Right ventricle myocardium superior (tissue), 1 donor: ENCODE measurements at regions of chr3 and their contacts with region 1.

Region 1: GRCh38 chr3:12891985-12892839 is 50.8 kb upstream of the RPL32 start:
- DNase-seq: peak; percentile 44
- ATAC-seq: peak; percentile 51

Region 2: DNA sequence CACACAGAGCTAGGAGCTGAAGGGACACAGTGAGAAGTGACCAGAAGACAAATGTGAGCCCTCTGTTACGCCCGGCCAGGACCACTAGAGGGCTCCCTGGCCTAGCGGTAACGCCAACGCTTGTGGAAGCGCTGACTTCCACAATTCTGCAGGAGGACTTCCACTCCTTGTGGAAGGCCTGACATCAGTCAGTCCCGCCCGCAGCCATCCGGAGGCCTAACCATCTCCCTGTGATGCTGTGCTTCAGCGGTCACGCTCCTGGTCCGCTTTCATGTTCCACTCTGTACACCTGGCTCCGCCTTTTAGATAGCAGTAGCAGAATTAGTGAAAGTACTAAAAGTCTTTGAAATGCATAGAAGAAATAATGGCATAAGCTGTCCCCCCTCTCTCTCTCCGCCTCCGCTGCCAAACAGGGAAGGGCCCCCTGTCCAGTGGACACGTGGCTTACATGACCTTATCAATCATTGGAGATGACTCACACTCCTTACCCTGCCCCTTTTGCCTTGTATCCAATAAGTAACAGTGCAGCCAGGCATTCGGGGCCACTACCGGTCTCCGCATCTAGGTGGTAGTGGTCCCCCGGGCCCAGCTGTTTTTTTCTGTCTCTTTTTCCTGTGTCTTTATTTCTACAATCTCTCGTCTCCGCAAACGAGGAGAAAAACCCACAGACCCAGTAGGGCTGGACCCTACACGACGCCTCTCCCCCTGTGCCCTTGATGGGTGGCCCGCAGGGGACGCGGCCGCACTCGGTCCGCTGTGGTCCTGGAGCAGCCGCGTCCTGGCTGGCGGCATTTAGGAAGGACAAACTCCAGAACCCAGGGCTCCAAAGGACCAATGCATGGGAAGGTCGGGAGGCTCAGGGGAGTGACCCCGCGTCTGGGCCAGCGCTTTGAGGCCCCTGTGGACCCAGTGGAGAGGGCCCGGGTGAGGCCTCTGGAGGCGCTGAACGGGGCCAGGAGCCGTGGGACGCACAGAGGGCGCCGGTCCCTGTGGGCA is 23.9 kb before region 1 on chr3:
- intact Hi-C with region 1: loop called (anchors 2 kb)
- DNase-seq: peak; percentile 91
- ATAC-seq: peak; percentile 96

Region 3: GRCh38 chr3:12984023-12984823 is 92.0 kb after region 1 on chr3:
- intact Hi-C with region 1: loop called (anchors 10 kb)
- DNase-seq: peak; percentile 75
- ATAC-seq: peak; percentile 87